Activated CD4-positive, alpha-beta T cell treated with anti-CD3 and anti-CD28 coated beads for 36 hours (primary cell): ENCODE measurements at regions of chrX and their contacts with region 1.

Region 1: DNA sequence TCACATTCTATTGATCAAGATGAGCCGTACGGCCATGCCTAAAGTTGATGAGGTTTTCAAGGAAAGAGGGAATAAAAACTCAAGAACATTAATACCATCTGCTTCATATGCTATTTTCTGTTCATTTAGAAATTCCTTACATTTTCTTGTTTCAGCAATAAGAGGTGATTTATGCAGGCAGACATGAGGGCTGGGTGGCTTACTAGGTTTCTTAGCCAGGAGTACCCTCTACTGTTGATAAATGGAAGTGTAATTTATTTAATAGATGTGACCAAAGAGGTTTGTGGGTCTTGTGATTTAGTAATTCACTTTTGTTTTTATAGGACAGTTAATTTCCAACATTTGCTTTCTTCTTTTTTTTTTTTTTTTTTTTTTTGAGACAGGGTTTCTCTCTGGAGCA is 6.4 kb upstream of the SMIM9 start:
- DNase-seq: peak; percentile 6
- ATAC-seq: peak; percentile 44
- H3K4me3 Mint-ChIP-seq: no peak overlapping the region
- H3K27ac Mint-ChIP-seq: no peak overlapping the region
- H3K4me1 Mint-ChIP-seq: peaks cover under 1% of the 10 kb centered on the region
- H3K27me3 Mint-ChIP-seq: no peaks in the 10 kb centered on the region

Region 2: DNA sequence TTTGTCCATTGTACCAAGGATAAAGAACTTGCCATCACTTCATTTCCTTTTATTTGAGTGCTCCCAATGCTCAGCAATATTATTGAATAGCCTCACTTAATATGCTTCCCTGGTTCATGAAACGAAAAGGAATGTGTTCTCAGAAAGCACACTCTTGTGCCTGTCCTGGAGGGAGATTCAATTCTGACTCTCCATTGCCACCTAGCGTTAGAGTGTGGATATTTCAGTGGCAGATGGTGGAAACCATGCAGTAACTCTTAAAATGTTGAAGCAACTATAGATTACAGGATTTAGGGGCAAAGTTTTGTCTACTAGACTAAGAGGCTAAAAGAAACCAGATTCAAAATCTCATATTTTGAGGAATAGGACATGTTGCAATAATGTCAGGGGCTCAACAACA is 125.9 kb before region 1 on chrX:
- CTCF ChIA-PET with region 1: no interaction called
- POLR2A ChIA-PET with region 1: no interaction called
- intact Hi-C with region 1: loop called in 1 of 2 experiments (anchors 5 kb)
- DNase-seq: peak; percentile 52
- ATAC-seq: no peak
- H3K4me3 Mint-ChIP-seq: no peak overlapping the region
- H3K27ac Mint-ChIP-seq: no peak overlapping the region
- H3K4me1 Mint-ChIP-seq: peaks cover 49% of the 10 kb centered on the region
- H3K27me3 Mint-ChIP-seq: no peaks in the 10 kb centered on the region